Activated CD4-positive, alpha-beta T cell treated with anti-CD3 and anti-CD28 coated beads, Interleukin-2, amount 10 ng/mL, durations not matched to agents 24 days and 14 days (primary cell): ENCODE measurements at regions of chr15 and their contacts with region 1.

Region 1: DNA sequence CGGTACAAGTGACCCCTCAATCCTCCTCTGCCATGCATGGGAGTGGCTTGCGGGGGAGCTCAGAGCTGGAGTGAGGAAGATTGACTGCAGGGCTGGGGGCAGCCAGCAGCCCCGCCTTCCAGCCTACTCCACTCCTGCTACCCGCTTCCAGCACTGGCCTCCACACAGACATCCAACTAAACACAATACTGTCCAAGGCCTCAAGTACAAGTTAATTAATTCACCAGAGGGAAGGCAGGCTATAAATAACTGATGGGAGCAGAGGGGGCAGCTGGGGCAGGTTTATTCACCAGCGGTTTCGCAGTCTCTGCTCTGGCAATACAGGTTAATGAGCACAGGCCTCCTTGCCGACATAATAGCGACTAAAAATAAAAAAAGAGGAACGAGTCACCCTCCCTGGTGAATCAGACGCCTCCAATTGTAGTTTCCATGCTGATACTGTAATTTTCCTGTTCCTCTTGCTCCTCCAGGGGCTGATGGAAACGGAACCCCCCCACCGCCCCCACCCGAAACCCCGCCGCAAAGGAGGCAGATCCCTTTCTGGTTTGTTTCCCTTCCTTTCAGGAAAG is 166.4 kb upstream of the TLE3 start:
- DNase-seq: no peak
- H3K4me3 Mint-ChIP-seq: no peak overlapping the region
- H3K27ac Mint-ChIP-seq: no peak overlapping the region
- H3K4me1 Mint-ChIP-seq: peaks cover 29% of the 10 kb centered on the region
- H3K27me3 Mint-ChIP-seq: peaks cover 40% of the 10 kb centered on the region

Region 2: GRCh38 chr15:70362886-70363285 is 98.8 kb after region 1 on chr15:
- intact Hi-C with region 1: no loop called
- DNase-seq: no peak
- H3K4me3 Mint-ChIP-seq: no peak overlapping the region
- H3K27ac Mint-ChIP-seq: no peak overlapping the region
- H3K4me1 Mint-ChIP-seq: no peaks in the 10 kb centered on the region
- H3K27me3 Mint-ChIP-seq: peaks cover 35% of the 10 kb centered on the region

Region 3: DNA sequence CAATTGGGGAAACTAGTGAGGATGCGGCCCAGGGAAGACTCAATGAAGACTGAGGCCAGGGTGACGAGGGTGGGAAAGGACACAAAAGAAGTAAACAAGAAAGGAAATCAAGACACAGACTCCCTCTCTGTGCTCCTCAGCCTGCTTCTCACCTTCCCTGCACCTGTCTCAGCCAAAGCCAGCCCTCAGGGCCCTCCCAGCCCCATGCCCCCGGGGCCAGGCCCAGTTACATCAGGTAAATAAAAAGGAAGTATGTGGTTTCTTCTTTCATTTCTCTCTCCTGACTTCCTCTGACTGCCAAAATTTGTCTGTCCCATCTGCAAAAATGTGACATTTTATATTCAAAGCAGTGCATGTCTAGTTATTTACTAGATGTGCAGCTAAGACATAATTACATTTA is 171.3 kb after region 1 on chr15:
- intact Hi-C with region 1: loop called (anchors 10 kb)
- DNase-seq: no peak
- H3K4me3 Mint-ChIP-seq: no peak overlapping the region
- H3K27ac Mint-ChIP-seq: no peak overlapping the region
- H3K4me1 Mint-ChIP-seq: peaks cover 20% of the 10 kb centered on the region
- H3K27me3 Mint-ChIP-seq: peaks cover 19% of the 10 kb centered on the region